ENCODE measurements at regions of chr4 and their contacts with region 1.

Region 1: GRCh38 chr4:153127760-153128494 is 76.3 kb upstream of the TRIM2 start:
- DNase-seq: peak; percentile 89
- H3K4me3 Mint-ChIP-seq: no peak overlapping the region
- H3K27ac Mint-ChIP-seq: no peak overlapping the region
- H3K4me1 Mint-ChIP-seq: peaks cover 7% of the 10 kb centered on the region
- H3K27me3 Mint-ChIP-seq: peaks cover 27% of the 10 kb centered on the region

Region 2: DNA sequence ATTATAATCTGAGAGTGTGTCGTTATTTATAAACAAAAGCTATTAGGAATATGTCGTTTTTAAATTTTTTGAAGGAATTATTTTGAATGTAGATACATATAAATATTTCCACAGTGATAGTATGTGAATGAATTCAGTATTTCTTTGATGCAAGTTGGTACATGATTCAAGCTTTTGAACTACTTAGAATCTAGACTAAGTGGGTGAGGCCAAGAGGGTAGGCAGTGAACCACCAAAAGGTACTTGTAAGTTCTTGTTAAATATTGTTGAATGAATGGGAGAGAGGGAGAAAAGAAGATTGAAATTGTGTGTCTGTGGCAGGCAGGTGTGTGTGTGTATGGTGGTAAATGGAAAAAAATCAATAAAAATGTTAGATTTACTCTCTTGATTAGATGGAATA is 278.6 kb before region 1 on chr4:
- CTCF ChIA-PET with region 1: interaction called, 11 read pairs
- POLR2A ChIA-PET with region 1: no interaction called
- DNase-seq: no peak
- H3K4me3 Mint-ChIP-seq: no peak overlapping the region
- H3K27ac Mint-ChIP-seq: no peak overlapping the region
- H3K4me1 Mint-ChIP-seq: peaks cover 16% of the 10 kb centered on the region
- H3K27me3 Mint-ChIP-seq: no peaks in the 10 kb centered on the region

Region 3: GRCh38 chr4:153083447-153083947 is 44.4 kb before region 1 on chr4:
- CTCF ChIA-PET with region 1: interaction called, 62 read pairs
- POLR2A ChIA-PET with region 1: interaction called, 3 read pairs
- DNase-seq: peak; percentile 62
- H3K4me3 Mint-ChIP-seq: no peak overlapping the region
- H3K27ac Mint-ChIP-seq: no peak overlapping the region
- H3K4me1 Mint-ChIP-seq: peaks cover 53% of the 10 kb centered on the region
- H3K27me3 Mint-ChIP-seq: peaks cover 14% of the 10 kb centered on the region

Region 4: GRCh38 chr4:153114771-153115321 is 13.1 kb before region 1 on chr4:
- CTCF ChIA-PET with region 1: interaction called, 12 read pairs
- POLR2A ChIA-PET with region 1: no interaction called
- DNase-seq: peak; percentile 68
- H3K4me3 Mint-ChIP-seq: peak overlapping the region; percentile 17
- H3K27ac Mint-ChIP-seq: no peak overlapping the region
- H3K4me1 Mint-ChIP-seq: peaks cover 8% of the 10 kb centered on the region
- H3K27me3 Mint-ChIP-seq: peaks cover 5% of the 10 kb centered on the region

Measured in activated CD4-positive, alpha-beta T cell treated with anti-CD3 and anti-CD28 coated beads, Interleukin-2, amount 10 ng/mL, durations not matched to agents 7 days and 5 days (primary cell).